Activated CD4-positive, alpha-beta memory T cell treated with anti-CD3 and anti-CD28 coated beads for 36 hours (primary cell): ENCODE measurements at regions of chr17 and their contacts with region 1.

Region 1: DNA sequence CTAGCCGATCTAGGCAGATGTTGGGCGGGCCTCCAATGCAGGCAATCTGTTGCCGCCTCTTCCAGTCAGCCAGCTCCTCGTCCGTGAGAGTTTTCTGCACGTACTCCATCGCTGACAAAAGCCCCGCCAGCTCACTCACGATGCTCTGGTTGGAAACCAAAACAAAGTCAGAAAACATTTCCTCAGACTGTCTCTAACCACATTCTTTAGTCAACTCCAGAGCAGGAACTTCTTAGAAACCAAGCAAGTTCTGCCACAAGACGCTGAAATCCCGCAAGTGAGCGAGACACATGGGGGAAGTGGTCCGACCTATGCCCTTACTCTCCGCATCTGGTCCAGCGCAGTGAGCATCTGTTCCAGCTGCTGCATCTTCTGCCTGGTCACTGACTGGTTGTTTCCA is 49.1 kb downstream of the STAT5A start:
- DNase-seq: peak; percentile 91
- H3K4me3 Mint-ChIP-seq: peak overlapping the region; percentile 60
- H3K27ac Mint-ChIP-seq: peak overlapping the region; percentile 91
- H3K4me1 Mint-ChIP-seq: peaks cover 78% of the 10 kb centered on the region
- H3K27me3 Mint-ChIP-seq: no peaks in the 10 kb centered on the region

Region 2: GRCh38 chr17:42097691-42098631 is 239.5 kb before region 1 on chr17 and contains the start of gene ZNF385C:
- CTCF ChIA-PET with region 1: no interaction called
- POLR2A ChIA-PET with region 1: no interaction called
- intact Hi-C with region 1: no loop called
- DNase-seq: peak; percentile 51
- H3K4me3 Mint-ChIP-seq: no peak within 1 kb of the TSS
- H3K27ac Mint-ChIP-seq: no peak within 1 kb of the TSS
- H3K4me1 Mint-ChIP-seq: peaks cover 8% of the 10 kb centered on the region
- H3K27me3 Mint-ChIP-seq: peaks cover 16% of the 10 kb centered on the region
- total RNA-seq, gene ZNF385C: 0.10 TPM in 1 of 2 experiments, not detected in the other

Region 3: DNA sequence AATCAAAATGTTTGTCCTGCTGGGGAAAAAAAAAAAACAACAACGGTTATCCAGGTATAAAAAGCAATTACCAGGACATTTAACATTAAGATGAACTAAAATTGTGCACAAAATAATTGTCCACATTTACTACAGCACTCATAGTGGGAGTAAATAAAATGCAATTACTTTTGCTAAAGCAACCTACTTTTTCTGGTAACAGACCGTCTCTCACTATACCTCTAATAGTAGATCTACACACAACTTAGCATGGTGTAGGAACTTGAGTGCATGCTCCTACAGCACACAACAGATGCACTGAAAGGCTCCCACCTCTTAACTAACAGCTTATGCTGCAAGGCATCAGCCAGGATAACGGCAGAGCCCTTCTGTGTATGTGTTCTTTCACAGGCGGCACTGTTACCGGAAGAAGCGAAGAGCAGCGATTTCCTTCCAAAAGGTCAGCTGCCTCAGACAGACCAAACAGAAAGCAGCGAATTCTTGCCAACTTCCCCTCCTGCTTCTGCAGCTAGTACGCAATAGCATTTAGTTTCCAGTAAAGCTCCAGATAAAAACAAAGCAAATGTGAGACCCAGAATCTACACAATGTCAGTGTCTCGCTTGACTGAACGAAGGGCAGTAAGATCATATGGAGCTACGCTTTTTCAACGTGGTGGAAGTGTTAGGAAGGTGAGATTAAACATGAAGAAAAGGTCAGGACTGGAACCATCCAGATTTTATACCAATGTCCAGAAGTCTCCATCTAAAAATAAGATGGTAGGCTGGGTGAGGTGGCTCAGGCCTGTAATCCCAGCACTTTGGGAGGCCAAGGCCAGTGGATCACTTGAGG is 88.9 kb before region 1 on chr17:
- CTCF ChIA-PET with region 1: interaction called, 3 read pairs
- POLR2A ChIA-PET with region 1: interaction called, 7 read pairs
- intact Hi-C with region 1: loop called (anchors 5 kb)
- DNase-seq: peak; percentile 88
- H3K4me3 Mint-ChIP-seq: peak overlapping the region; percentile 73
- H3K27ac Mint-ChIP-seq: peak overlapping the region; percentile 95
- H3K4me1 Mint-ChIP-seq: peaks cover 68% of the 10 kb centered on the region
- H3K27me3 Mint-ChIP-seq: no peaks in the 10 kb centered on the region

Region 4: GRCh38 chr17:42266918-42267778 is 70.3 kb before region 1 on chr17:
- CTCF ChIA-PET with region 1: no interaction called
- POLR2A ChIA-PET with region 1: interaction called, 4 read pairs
- intact Hi-C with region 1: loop called (anchors 2 kb)
- DNase-seq: peak; percentile 66
- H3K4me3 Mint-ChIP-seq: peak overlapping the region; percentile 21
- H3K27ac Mint-ChIP-seq: peak overlapping the region; percentile 97
- H3K4me1 Mint-ChIP-seq: peaks cover 57% of the 10 kb centered on the region
- H3K27me3 Mint-ChIP-seq: no peaks in the 10 kb centered on the region

Region 5: DNA sequence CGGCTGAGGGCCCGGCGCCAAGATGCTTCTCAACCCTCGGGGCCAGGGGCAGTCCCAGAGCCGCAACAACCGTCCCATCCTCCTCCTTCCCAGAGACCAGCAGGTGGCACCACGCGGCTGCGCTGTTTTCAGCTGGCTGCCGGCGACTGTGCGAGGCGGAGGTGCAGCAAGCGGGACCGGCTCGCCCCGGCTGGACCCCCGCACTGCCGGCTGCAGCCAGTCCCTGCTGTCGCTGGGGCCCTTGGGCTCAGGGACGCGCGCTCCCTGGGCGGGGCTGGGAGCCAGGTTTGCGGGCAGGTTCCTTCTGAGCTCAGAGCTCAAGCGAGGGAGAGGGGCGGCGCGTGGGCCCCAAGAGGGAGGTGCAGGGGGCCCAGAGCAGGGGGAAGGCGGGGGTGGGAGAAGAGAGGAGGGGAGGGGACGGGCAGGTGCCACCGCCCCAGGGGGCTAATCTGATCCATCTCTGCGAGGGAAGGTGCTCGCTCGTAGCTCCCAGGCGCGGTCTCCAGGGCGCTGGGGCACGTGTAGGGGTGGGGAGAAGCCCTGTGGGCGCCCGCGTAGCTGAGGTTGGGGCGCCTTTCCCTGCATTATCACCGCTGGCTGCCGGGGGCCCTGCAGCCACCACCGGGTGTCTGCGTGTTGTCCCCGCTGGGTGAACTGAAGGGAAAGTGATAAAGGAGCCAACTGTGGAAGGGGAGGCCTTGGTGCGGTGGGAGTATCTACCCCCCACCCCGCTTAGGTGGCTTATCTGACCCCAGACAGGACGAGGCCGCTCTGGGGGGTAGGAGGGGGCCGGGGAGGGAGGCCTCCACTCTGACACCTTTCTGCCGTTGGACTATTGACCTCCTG is 24.9 kb before region 1 on chr17:
- CTCF ChIA-PET with region 1: interaction called, 4 read pairs
- POLR2A ChIA-PET with region 1: interaction called, 4 read pairs
- intact Hi-C with region 1: loop called (anchors 2 kb)
- DNase-seq: peak; percentile 92
- H3K4me3 Mint-ChIP-seq: peak overlapping the region; percentile 42
- H3K27ac Mint-ChIP-seq: peak overlapping the region; percentile 74
- H3K4me1 Mint-ChIP-seq: peaks cover 76% of the 10 kb centered on the region
- H3K27me3 Mint-ChIP-seq: no peaks in the 10 kb centered on the region

Region 6: DNA sequence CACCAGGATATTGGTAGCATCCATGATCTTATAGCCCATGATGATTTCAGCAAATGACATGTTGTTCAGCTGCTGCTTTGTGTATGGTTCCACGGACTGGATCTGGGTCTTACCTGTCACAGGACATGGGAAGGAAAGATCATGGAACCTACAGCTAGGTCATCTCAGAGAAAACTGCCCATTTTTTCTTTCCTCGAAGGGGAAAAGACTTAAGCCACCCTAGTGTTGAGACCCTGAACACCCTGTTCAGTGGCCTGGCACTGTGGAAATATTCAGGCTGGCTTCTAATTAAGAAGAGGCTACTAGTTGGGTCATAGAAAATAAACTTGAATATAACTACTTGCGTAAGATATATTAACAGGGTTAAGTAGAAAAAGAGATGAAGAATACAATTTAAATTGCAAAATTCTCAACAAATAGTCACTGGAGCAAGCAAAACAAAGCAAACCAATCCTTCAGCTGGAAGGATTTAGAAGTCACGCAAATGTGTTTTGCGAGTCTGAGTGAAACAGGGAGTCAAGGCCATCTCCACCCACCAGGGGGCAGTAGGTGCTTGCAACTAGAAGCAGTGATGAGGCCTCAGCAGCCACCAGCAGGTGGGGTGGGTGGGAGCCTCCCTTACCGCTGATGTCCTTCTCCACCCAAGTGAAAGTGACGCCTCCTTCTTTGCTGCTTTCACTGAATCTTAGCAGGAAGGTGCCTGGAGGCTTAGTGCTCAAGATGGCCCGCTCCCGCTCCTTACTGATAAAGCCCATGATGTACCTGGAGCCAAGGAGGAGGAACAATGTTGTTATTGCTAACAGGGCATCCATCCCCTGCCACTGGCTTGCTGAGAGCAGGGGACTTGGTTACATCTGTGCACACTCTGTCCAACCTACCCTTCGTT is 14.8 kb before region 1 on chr17:
- CTCF ChIA-PET with region 1: interaction called, 11 read pairs
- POLR2A ChIA-PET with region 1: interaction called, 4 read pairs
- intact Hi-C with region 1: no loop called
- DNase-seq: peak; percentile 96
- H3K4me3 Mint-ChIP-seq: no peak overlapping the region
- H3K27ac Mint-ChIP-seq: peak overlapping the region; percentile 67
- H3K4me1 Mint-ChIP-seq: peaks cover 37% of the 10 kb centered on the region
- H3K27me3 Mint-ChIP-seq: no peaks in the 10 kb centered on the region

Region 7: DNA sequence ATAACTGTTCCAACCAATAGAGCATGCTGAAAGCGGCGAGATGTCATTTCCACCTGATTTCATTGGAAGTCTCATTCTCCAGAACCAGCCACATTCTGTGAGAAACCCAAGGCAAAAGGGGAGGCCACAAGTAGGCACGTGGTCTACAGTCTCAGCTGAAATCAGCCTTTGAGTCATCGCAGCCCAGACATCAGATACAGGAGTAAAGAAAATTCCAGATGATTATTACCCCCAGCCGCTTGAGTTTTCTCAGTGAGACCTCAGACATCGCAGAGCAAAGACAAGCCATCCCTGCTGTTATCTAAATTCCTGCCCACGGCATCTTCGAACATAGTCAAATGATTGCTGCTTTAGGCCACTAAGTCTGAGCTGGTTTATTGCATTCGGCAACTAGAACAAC is 27.7 kb after region 1 on chr17:
- CTCF ChIA-PET with region 1: interaction called, 3 read pairs
- POLR2A ChIA-PET with region 1: interaction called, 8 read pairs
- intact Hi-C with region 1: loop called (anchors 1 kb)
- DNase-seq: peak; percentile 53
- H3K4me3 Mint-ChIP-seq: no peak overlapping the region
- H3K27ac Mint-ChIP-seq: peak overlapping the region; percentile 71
- H3K4me1 Mint-ChIP-seq: peaks cover 71% of the 10 kb centered on the region
- H3K27me3 Mint-ChIP-seq: no peaks in the 10 kb centered on the region

Region 8: DNA sequence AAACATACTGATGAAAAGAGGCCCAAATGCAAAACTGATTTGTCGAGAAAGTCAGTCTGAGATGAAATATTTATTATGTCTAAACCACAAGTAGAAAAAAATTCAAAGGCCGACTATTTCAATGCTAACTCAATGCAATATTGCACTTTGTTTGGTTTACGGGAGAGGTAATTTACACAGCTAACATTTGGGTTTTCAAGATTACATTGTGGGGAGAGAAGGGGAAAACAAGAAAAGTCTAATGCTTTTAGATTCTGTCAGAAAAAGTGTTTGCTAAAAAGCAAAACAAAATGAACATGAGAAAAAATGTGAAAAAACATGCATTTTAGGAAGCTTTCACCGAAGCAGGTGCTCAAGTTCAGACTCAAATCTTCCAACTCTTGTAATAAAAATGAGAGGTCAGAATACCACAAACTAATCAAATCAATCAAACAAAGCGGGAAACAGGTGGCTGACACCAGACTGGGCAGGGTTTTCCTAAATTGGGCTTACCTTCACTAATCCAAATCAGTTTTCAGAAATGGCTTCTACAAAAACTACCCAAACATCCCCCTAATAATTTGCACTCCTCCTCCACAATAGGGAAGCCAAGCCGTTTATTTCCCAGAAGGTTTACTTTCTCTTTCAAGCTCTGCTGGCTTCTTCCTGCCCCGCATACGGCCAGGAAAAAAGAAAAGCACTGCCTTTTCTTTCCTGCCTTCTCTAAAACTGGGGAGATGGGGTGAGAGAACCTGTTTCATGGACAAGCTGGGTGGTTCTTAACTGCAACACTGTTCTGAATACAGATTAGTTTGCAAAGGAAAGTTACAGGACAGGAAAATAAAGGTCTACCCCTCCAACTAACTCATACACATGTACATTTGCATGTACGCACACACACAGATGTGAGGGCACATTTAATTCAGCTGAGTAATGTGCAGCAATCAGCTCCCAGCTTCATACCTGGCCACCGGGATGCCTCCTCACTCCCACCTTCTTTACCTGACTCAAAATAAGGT is 41.5 kb after region 1 on chr17:
- CTCF ChIA-PET with region 1: interaction called, 4 read pairs
- POLR2A ChIA-PET with region 1: interaction called, 11 read pairs
- intact Hi-C with region 1: loop called (anchors 1 kb)
- DNase-seq: peak; percentile 48
- H3K4me3 Mint-ChIP-seq: peak overlapping the region; percentile 75
- H3K27ac Mint-ChIP-seq: peak overlapping the region; percentile 91
- H3K4me1 Mint-ChIP-seq: peaks cover 67% of the 10 kb centered on the region
- H3K27me3 Mint-ChIP-seq: no peaks in the 10 kb centered on the region

Region 9: DNA sequence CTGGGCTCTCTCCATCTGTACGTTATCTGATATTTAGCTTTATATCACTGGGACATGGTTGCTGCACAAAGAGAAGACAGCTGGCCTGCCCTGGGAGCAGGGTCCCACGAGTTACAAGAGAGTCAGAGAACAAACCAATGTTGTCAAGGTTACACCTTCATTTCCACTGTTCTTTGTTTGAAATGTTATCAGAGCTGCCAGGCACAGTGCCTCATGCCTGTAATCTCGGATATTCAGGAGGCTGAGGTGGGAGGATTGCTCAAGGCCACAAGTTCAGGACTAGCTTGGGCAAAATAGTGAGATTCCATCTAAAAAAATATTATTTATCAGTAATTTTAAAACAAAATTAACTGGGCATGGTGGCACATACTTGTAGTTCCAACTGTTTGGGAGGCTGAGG is 155.9 kb after region 1 on chr17:
- CTCF ChIA-PET with region 1: no interaction called
- POLR2A ChIA-PET with region 1: no interaction called
- intact Hi-C with region 1: no loop called
- DNase-seq: no peak
- H3K4me3 Mint-ChIP-seq: no peak overlapping the region
- H3K27ac Mint-ChIP-seq: no peak overlapping the region
- H3K4me1 Mint-ChIP-seq: no peaks in the 10 kb centered on the region
- H3K27me3 Mint-ChIP-seq: no peaks in the 10 kb centered on the region